CD8-positive, alpha-beta memory T cell (primary cell): ENCODE measurements at regions of chr7 and their contacts with region 1.

Region 1: DNA sequence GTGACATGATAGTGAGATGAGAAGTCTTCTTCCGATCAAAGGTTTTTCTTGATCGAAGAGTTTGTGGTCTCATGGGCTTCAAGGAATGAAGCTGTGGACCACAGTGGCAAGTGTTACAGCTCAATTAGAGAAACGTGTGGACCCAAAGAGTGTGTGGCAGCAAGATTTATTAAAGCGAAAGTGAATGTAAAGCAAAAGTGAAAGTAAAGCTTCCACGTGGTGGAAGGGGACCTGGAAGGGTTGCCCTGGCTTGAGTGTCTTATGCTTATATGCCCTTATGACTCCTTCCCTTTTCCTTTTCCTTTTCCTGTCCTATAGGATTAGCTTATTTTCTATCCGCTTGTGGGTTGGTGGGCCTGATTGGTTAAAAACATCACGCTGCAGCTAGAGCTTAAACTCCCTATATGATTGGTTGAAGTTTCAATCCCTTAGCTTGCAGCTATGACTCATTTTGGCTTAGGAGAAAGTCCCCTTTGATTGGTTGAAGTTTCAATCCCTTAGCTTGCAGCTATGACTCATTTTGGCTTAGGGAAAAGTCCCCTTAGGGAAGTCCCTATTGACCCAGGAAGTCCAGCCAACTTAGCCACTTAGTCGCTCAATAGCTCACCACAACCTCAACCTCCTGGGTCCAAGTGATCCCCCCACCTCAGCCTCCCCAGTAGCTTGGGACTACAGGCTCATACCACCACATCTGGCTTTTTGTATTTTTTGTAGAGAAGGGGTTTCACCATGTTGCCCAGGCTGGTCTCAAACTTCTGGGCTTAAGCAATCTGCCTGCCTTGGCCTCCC is 34.7 kb downstream of the MRPS24 start:
- DNase-seq: peak; percentile 7 to 62 (median 42)
- H3K4me3 ChIP-seq: peak overlapping the region; percentile 51
- H3K4me3 Mint-ChIP-seq: peak overlapping the region; percentile 86 to 94 (median 90)
- H3K27ac ChIP-seq: peak overlapping the region; percentile 29
- H3K27ac Mint-ChIP-seq: peak overlapping the region; percentile 93 to 99 (median 98)
- H3K4me1 ChIP-seq: peaks cover 16% of the 10 kb centered on the region
- H3K4me1 Mint-ChIP-seq: peaks cover 19 to 32% (median 23%) of the 10 kb centered on the region in 3 donors
- H3K27me3 ChIP-seq: no peaks in the 10 kb centered on the region
- H3K27me3 Mint-ChIP-seq: peaks cover 0 to 3% of the 10 kb centered on the region in 2 donors

Region 2: DNA sequence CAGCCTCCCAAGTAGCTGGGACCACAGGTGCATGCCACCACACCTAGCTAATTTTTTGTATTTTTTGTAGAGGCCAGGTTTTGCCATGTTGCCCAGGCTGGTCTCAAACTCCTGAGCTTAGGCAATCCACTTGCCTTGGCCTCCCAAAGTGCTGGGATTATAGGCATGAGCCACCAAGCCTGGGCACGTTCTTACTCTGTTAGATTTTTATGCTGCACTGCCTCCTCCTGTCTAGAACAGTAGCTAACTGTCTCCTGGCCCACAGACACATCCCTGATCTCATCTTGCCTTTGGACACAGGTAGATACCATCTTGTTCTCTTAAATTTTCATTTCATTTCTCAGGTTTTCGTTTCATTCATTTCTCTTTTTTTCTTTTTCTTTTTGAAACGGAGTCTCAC is 35.1 kb before region 1 on chr7:
- CTCF ChIA-PET with region 1: interaction called, 10 read pairs
- POLR2A ChIA-PET with region 1: no interaction called
- DNase-seq: no peak
- H3K4me3 ChIP-seq: no peak overlapping the region
- H3K4me3 Mint-ChIP-seq: no peak overlapping the region
- H3K27ac ChIP-seq: no peak overlapping the region
- H3K27ac Mint-ChIP-seq: peak overlapping the region in 1 of 8 donors; percentile 2
- H3K4me1 ChIP-seq: no peaks in the 10 kb centered on the region
- H3K4me1 Mint-ChIP-seq: no peaks in the 10 kb centered on the region
- H3K27me3 ChIP-seq: no peaks in the 10 kb centered on the region
- H3K27me3 Mint-ChIP-seq: no peaks in the 10 kb centered on the region

Region 3: GRCh38 chr7:43850348-43851116 is 15.9 kb after region 1 on chr7:
- CTCF ChIA-PET with region 1: interaction called, 25 read pairs
- POLR2A ChIA-PET with region 1: no interaction called
- DNase-seq: no peak
- H3K4me3 ChIP-seq: no peak overlapping the region
- H3K4me3 Mint-ChIP-seq: no peak overlapping the region
- H3K27ac ChIP-seq: no peak overlapping the region
- H3K27ac Mint-ChIP-seq: no peak overlapping the region
- H3K4me1 ChIP-seq: no peaks in the 10 kb centered on the region
- H3K4me1 Mint-ChIP-seq: no peaks in the 10 kb centered on the region
- H3K27me3 ChIP-seq: no peaks in the 10 kb centered on the region
- H3K27me3 Mint-ChIP-seq: peaks cover 3 to 8% of the 10 kb centered on the region in 2 donors